ENCODE measurements at regions of chr22 and their contacts with region 1.

Region 1: GRCh38 chr22:31148953-31149627 is 8.8 kb upstream of the PLA2G3 start:
- DNase-seq: peak; percentile 78
- H3K4me3 ChIP-seq: no peak overlapping the region
- H3K27ac ChIP-seq: no peak overlapping the region
- H3K4me1 ChIP-seq: no peaks in the 10 kb centered on the region
- H3K27me3 ChIP-seq: no peaks in the 10 kb centered on the region
- CTCF ChIP-seq: peak; percentile 87

Region 2: GRCh38 chr22:30606455-30607299 is 542.4 kb before region 1 on chr22 and contains the start of gene TCN2:
- CTCF ChIA-PET with region 1: interaction called, 13 read pairs
- POLR2A ChIA-PET with region 1: no interaction called
- intact Hi-C with region 1: no loop called
- DNase-seq: peak; percentile 67
- H3K4me3 ChIP-seq: peak within 1 kb of the TSS; percentile 57
- H3K27ac ChIP-seq: peak within 1 kb of the TSS; percentile 56
- H3K4me1 ChIP-seq: peaks cover 18% of the 10 kb centered on the region
- H3K27me3 ChIP-seq: no peaks in the 10 kb centered on the region
- CTCF ChIP-seq: no peak
- total RNA-seq, gene TCN2: 7.3 and 9.8 TPM in 2 replicates

Region 3: GRCh38 chr22:30763815-30764686 is 385.0 kb before region 1 on chr22:
- CTCF ChIA-PET with region 1: no interaction called
- POLR2A ChIA-PET with region 1: no interaction called
- intact Hi-C with region 1: loop called (anchors 2 kb)
- DNase-seq: peak; percentile 75
- H3K4me3 ChIP-seq: no peak overlapping the region
- H3K27ac ChIP-seq: no peak overlapping the region
- H3K4me1 ChIP-seq: no peaks in the 10 kb centered on the region
- H3K27me3 ChIP-seq: no peaks in the 10 kb centered on the region
- CTCF ChIP-seq: peak; percentile 73

Region 4: DNA sequence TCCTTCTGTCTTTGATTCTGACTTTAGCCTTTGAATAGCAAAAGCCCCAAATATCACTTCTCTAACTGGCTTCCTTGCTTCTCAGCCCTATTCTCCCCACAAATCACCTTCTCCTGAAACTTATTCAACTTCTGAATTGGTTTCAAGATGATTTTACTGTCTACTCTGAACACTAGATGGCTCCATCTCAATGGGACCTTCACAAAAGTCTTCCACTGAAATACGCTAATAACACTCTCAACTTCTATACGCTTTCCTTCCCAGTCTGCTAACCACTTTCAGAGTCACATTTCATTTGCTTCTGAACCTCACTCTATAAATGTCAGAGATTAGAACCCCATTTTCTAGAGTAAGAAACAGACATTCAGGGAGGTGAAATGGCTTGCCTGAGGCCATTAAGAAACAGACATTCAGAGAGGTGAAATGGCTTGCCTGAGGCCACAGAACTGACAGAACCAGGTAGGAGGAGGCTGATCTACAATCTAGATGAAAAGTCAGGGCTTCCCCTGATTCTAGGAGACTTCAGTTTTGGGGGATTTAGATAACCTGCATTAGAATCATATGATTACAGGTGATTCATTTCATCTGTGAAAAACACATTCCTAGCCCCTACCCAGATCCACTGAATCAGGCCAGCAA is 201.2 kb before region 1 on chr22:
- CTCF ChIA-PET with region 1: no interaction called
- POLR2A ChIA-PET with region 1: no interaction called
- intact Hi-C with region 1: loop called (anchors 2 kb)
- DNase-seq: peak; percentile 75
- H3K4me3 ChIP-seq: no peak overlapping the region
- H3K27ac ChIP-seq: no peak overlapping the region
- H3K4me1 ChIP-seq: peaks cover 17% of the 10 kb centered on the region
- H3K27me3 ChIP-seq: no peaks in the 10 kb centered on the region
- CTCF ChIP-seq: peak; percentile 69

Region 5: DNA sequence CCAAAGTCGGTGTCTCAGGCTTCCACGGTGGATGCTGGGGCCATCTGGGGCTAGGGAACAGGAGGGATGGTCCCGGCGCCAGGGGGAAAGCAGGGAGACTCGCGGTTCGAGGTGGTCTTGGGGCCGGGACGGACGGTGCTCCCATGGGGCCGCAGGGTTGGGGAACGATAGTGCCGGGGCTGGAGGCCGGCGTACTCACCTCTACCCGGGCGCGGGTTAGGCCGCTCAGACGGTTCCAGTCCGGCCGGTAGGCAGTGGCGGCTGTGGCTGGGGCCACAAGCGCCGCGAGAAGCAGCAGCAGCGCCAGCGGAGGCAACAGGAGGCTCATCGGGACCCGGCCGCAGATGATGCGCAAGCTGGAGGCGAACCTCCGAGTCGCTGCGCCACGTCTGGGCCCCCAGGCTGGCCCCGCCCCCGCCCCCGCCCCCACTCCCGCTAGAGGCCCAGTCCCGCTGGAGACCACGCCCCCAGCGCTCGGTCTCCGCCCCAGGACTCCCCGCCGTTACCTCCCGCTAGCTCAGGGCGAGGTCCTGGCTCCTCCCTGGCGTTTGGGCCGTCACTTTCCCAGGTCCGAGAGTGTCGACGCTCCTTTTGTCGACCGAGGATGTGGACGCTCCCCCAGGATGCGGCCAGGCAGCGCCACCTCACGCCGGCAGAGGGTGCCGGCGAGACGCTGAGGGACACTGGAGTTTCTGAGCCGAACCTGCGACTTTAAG is 41.8 kb before region 1 on chr22 and contains the start of gene SELENOM:
- CTCF ChIA-PET with region 1: interaction called, 4 read pairs
- POLR2A ChIA-PET with region 1: no interaction called
- intact Hi-C with region 1: loop called (anchors 1 kb)
- DNase-seq: peak; percentile 94
- H3K4me3 ChIP-seq: peak within 1 kb of the TSS; percentile 57
- H3K27ac ChIP-seq: peak within 1 kb of the TSS; percentile 14
- H3K4me1 ChIP-seq: peaks cover 4% of the 10 kb centered on the region
- H3K27me3 ChIP-seq: no peaks in the 10 kb centered on the region
- CTCF ChIP-seq: peak; percentile 98
- total RNA-seq, gene SELENOM: 3.2 and 5.0 TPM in 2 replicates

Region 6: GRCh38 chr22:31122532-31123291 is 26.4 kb before region 1 on chr22 and contains the start of gene INPP5J:
- CTCF ChIA-PET with region 1: no interaction called
- POLR2A ChIA-PET with region 1: no interaction called
- intact Hi-C with region 1: no loop called
- DNase-seq: peak; percentile 64
- H3K4me3 ChIP-seq: peak within 1 kb of the TSS; percentile 60
- H3K27ac ChIP-seq: peak within 1 kb of the TSS; percentile 72
- H3K4me1 ChIP-seq: peaks cover 9% of the 10 kb centered on the region
- H3K27me3 ChIP-seq: no peaks in the 10 kb centered on the region
- CTCF ChIP-seq: no peak
- total RNA-seq, gene INPP5J: 4.6 and 4.8 TPM in 2 replicates

Region 7: DNA sequence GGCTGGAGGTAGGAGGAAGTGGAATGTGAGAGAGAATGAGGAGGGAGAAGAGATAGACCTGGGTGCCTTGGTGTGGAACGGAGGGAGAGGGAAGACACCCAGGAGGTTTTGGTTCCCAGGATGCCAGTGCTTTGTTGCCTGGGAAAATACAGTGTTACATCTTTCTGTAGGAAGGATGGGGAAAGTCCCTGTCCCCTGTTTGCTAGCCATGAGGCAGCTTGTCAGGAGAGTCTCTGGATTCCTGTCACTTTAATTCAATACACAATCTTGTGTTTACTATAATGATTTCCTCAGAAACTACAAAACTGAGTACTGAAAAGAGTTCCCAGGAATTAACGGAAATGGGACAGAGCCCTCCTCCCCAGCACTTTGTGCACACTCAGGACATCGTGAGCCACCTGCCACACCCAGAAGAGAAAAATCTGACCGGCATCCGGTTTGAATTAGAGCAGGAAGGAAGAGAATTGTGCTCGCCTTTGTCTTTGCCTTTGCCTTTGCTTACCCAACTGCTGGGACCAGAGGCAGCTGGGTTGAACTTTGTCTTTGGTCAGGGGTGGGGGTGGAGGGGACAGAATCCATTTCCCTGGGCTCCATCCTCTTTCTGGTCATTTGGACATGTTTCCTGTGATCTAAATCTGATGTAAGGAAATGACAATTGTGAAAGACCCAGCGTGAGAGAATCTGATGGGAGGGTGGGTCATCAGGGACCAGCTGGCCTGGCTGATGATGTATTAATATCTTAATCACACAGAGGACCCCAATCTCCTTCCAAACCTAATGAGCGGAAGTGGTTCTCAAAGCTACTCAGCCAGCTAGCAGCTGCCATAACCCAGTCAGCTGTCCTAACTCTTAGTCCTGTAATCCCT is 61.7 kb after region 1 on chr22:
- CTCF ChIA-PET with region 1: no interaction called
- POLR2A ChIA-PET with region 1: no interaction called
- intact Hi-C with region 1: no loop called
- DNase-seq: peak; percentile 78
- H3K4me3 ChIP-seq: no peak overlapping the region
- H3K27ac ChIP-seq: peak overlapping the region; percentile 64
- H3K4me1 ChIP-seq: peaks cover 16% of the 10 kb centered on the region
- H3K27me3 ChIP-seq: no peaks in the 10 kb centered on the region
- CTCF ChIP-seq: no peak